Activated naive CD4-positive, alpha-beta T cell treated with anti-CD3 and anti-CD28 coated beads for 36 hours (primary cell): ENCODE measurements at regions of chr12 and their contacts with region 1.

Region 1: DNA sequence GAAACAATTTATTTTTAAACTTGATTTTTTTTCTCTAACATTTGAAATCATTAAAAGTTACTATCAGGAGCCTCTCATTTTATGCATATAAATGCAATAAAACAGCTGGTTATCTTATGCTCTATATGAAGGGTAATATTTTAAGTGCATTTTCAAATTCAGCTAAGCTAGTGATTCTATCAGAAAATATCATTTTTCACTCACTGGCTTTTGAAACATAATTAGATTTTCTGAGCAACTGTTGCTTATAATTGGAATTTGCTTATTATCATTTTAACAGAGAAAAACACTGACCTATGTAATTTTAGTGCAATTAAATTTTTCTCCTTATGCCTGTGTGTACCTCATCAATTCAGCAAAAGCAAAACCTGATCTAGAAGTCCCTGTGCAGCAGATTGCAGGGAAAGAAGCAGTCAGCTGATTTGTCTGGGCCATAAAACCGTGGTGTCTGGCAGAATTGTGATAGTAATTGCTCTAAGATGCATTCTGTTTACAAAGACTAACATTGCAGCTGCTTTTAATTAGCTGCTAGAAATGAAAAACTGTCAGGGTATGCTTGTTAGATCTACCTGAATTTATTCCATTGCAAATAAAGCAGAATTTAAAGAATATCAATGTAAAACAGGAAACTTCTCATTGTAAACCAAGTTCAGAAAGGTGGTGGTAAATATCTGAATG is 75.0 kb downstream of the BICD1 start:
- DNase-seq: no peak
- H3K4me3 Mint-ChIP-seq: no peak overlapping the region
- H3K27ac Mint-ChIP-seq: no peak overlapping the region
- H3K4me1 Mint-ChIP-seq: no peaks in the 10 kb centered on the region
- H3K27me3 Mint-ChIP-seq: no peaks in the 10 kb centered on the region

Region 2: DNA sequence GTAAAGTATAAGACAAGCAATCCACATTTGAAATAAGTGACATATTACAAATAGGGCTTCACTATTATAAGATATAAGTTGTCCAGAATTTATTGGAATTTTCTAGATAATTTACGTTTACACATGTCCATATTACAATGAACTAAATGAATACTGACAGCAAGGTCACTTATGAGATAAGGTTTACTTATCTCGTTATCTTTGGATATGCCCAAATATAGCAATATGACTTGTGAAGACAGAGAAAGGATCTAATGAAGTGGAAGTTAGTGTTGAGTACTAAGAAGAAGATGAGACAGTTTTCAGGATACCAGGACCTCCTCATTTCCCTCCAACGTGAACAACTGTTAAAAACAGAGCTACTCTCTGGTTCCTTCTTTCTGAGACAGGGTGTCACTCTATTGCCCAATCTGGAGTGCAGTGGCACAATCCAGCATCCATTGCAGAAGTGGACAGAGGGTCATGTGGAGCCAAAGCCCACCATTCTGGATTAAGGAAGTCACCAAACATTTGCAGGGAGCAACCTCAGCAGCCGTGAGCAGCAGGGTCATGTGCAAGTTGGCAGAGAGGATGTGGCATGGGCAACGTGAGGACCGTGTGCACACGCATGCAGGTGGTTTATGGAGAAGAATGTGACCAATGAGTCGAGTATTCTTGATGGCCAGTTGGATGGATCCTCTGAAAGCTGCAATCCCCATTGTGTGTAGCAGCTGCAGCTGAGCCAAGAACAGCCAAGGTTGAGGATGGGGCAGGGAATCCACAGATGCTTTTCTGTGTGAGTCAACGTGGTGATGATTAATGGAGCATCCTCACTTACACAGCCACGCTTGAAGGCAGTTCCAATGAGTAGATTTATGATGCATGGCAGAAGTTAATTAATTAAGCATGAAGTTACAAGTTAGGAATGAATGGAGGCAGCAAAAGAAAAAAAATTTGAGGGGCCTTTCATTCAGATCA is 36.0 kb after region 1 on chr12:
- CTCF ChIA-PET with region 1: interaction called, 4 read pairs
- intact Hi-C with region 1: loop called (anchors 5 kb)
- DNase-seq: no peak
- H3K4me3 Mint-ChIP-seq: no peak overlapping the region
- H3K27ac Mint-ChIP-seq: no peak overlapping the region
- H3K4me1 Mint-ChIP-seq: peaks cover 3% of the 10 kb centered on the region
- H3K27me3 Mint-ChIP-seq: no peaks in the 10 kb centered on the region